Sigmoid colon (tissue), 7 donors: ENCODE measurements at regions of chr1 and their contacts with region 1.

Region 1: GRCh38 chr1:87328272-87329050 is at the start of gene LMO4:
- DNase-seq: peak; percentile 99
- H3K4me3 ChIP-seq: peak within 1 kb of the TSS; percentile 77 to 91 (median 88)
- H3K27ac ChIP-seq: peak within 1 kb of the TSS; percentile 97 to 99 (median 98)
- H3K4me1 ChIP-seq: peaks cover 0 to 32% (median 20%) of the 10 kb centered on the region in 4 donors
- H3K27me3 ChIP-seq: no peaks in the 10 kb centered on the region
- CTCF ChIP-seq: no peak
- EP300 ChIP-seq: peak in 1 of 4 donors; percentile 12
- POLR2A ChIP-seq: peak; percentile 85 to 87
- total RNA-seq, gene LMO4: 41.7 to 68.3 (median 59.3) TPM

Region 2: DNA sequence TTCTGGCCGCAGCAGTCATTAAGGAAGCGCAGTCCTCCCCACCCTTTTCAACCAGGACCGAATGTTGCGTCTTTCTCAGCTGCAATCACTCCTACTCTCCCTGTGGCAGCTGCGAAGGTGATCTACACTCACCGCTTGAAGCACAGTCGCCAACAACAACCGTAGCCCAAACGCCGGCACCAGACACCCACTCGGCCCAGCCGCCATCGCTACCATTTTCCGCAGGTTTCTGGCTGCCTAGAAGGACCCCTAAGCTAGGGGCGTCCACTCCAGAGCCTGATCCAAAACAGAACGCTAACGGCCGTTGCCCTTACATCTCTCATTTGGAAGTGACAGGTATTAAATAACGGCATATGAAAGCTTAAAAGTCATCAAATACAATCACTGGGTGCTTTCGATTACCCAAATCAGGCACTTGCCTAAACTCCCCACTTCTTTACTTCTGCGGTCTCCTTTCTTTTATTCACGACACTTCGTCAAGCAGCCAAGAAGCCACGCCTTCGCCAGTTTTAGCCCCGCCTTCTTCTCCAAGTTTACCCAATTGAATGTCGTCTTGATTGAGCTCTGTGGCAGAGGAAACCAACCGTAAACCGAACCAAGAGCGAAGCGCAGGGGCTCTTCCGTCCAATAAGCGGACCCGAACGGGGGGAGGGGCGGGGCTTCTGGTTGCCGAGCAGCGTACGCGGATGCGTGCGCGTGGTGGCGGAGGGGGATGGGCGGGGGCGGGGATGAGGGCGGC is 414.4 kb before region 1 on chr1 and contains the start of gene SELENOF:
- intact Hi-C with region 1: loop called (anchors 5 kb)
- DNase-seq: peak; percentile 99
- H3K4me3 ChIP-seq: peak within 1 kb of the TSS; percentile 78 to 98 (median 87)
- H3K27ac ChIP-seq: peak within 1 kb of the TSS; percentile 89 to 94 (median 91)
- H3K4me1 ChIP-seq: peaks cover 0 to 36% (median 19%) of the 10 kb centered on the region in 4 donors
- H3K27me3 ChIP-seq: no peaks in the 10 kb centered on the region
- CTCF ChIP-seq: no peak
- EP300 ChIP-seq: no peak
- POLR2A ChIP-seq: no peak
- total RNA-seq, gene SELENOF: 66.7 to 110 (median 84.1) TPM

Region 3: DNA sequence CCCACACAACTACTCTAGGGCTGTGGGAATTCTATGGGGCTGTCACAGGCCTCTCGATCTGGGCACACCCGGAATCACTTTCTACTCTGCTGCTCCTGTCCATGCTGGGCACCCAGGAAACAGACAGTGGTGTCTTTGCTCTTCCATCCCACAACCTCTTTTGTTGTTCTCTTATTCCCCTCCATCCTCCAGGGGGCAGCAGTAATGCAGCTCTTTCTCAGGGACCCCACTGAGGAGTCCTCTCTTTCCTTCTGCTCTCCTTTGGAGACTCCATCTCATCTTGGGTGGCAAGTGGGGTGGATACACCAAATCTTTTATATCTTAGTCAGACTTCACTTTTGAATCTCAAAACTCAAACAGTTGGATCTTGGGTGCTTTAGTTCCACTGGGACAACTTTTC is 207.7 kb before region 1 on chr1:
- intact Hi-C with region 1: no loop called
- DNase-seq: no peak
- H3K4me3 ChIP-seq: no peak overlapping the region
- H3K27ac ChIP-seq: no peak overlapping the region
- H3K4me1 ChIP-seq: no peaks in the 10 kb centered on the region
- H3K27me3 ChIP-seq: no peaks in the 10 kb centered on the region
- CTCF ChIP-seq: no peak
- EP300 ChIP-seq: no peak
- POLR2A ChIP-seq: no peak

Region 4: DNA sequence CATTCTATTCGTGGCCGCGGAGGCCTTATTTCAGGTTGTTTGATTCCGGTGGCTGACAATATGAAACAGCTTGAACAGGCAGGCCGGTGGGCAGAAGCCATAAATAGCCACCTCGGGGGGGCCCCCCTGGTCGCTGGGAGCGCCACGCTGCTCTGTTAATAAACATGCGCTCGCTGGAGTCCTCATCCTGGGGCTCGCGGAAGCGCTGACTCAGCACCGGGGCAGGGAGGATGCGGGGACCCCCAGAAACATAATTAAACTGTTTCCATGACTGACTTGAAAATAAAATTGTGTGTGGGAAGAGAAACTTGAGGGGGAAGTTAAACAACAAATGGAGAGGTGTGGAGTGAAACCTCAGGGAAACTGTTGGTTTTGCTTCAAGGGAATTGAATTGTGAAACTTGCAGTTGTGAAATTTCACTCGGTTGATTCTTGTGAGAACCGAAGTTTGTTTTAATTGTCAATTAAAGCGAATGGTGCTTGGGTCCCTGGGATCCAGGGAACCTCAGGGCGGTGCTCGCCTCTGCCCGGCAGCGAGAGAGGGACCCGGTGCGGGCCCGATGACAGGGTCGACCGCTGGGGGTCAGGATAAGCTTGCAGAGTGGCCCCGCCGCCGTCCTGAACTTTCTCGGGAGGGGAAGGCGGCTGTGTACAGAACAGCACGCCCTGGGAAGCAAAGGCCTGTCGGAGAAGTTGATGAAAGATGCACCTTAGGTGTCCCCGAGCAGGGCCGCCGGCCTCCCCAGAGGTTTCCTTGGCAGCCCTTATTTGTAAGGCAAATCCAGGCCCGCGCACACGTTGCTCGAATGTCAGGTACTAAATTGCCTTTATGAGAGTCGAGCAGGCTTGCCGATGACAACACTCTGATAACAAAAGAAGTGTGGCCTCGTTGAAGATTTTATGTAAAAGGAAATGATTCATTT is 176.7 kb before region 1 on chr1:
- intact Hi-C with region 1: loop called (anchors 5 kb)
- DNase-seq: peak; percentile 83
- H3K4me3 ChIP-seq: peak overlapping the region; percentile 0 to 44 (median 36)
- H3K27ac ChIP-seq: peak overlapping the region; percentile 28 to 58 (median 43)
- H3K4me1 ChIP-seq: peaks cover 0 to 17% (median 5%) of the 10 kb centered on the region in 4 donors
- H3K27me3 ChIP-seq: no peaks in the 10 kb centered on the region
- CTCF ChIP-seq: peak in 3 of 4 experiments; percentile 5 to 45 (median 21)
- EP300 ChIP-seq: no peak
- POLR2A ChIP-seq: no peak

Region 5: DNA sequence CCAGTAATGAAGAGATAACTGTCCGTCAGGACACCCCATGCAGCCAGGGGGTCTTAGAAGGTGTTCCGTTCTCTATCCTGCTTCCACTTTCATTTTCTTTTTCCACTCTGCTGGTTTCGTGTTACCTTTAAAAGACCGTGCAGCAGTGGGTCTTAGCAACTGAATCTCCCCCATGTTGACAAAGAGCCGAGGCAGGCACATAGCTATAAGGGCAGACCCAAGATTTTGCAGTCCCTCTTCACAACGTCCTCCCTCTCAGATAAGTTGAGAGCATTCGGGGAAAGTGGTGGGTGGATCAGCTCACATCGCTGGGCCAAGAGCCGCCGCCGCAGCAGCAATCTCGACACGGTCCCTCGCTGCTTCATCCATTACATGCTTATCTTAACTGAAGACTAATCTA is 355.7 kb after region 1 on chr1:
- intact Hi-C with region 1: loop called (anchors 2 kb)
- DNase-seq: no peak
- H3K4me3 ChIP-seq: peak overlapping the region; percentile 36 to 52 (median 44)
- H3K27ac ChIP-seq: peak overlapping the region; percentile 5 to 77 (median 72)
- H3K4me1 ChIP-seq: peaks cover 0 to 35% (median 30%) of the 10 kb centered on the region in 4 donors
- H3K27me3 ChIP-seq: no peaks in the 10 kb centered on the region
- CTCF ChIP-seq: no peak
- EP300 ChIP-seq: no peak
- POLR2A ChIP-seq: no peak

Region 6: GRCh38 chr1:87953732-87954344 is 625.4 kb after region 1 on chr1:
- intact Hi-C with region 1: loop called (anchors 2 kb)
- DNase-seq: peak; percentile 77
- H3K4me3 ChIP-seq: no peak overlapping the region
- H3K27ac ChIP-seq: no peak overlapping the region
- H3K4me1 ChIP-seq: peaks cover 0 to 26% (median 11%) of the 10 kb centered on the region in 4 donors
- H3K27me3 ChIP-seq: no peaks in the 10 kb centered on the region
- CTCF ChIP-seq: peak; percentile 50 to 79 (median 58)
- EP300 ChIP-seq: peak in 1 of 4 donors; percentile 5
- POLR2A ChIP-seq: no peak